ENCODE measurements at regions of chr2 and their contacts with region 1.

Region 1: DNA sequence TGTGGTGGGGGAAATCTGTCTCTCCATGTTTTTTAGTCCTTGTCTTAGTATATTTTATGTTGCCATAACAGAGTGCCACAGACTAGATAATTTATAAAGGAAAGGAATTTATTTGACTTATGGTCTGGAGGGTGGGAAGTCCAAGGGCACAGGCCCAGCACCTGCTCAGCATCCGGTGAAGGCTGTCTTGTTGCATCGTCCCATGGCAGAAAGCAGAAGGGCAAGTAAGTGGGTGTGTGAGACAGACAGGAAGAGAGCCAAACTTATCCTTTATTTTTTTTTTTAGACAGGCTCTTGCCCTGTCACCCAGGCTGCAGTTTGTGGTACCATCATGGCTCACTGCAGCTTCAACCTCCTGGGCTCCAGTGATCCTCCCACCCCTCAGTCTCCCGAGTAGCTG is 98.1 kb downstream of the HS1BP3 start:
- DNase-seq: no peak
- ATAC-seq: no peak
- H3K4me3 ChIP-seq: no peak overlapping the region
- H3K27ac ChIP-seq: no peak overlapping the region
- H3K4me1 ChIP-seq: no peaks in the 10 kb centered on the region
- H3K27me3 ChIP-seq: no peaks in the 10 kb centered on the region
- CTCF ChIP-seq: no peak

Region 2: DNA sequence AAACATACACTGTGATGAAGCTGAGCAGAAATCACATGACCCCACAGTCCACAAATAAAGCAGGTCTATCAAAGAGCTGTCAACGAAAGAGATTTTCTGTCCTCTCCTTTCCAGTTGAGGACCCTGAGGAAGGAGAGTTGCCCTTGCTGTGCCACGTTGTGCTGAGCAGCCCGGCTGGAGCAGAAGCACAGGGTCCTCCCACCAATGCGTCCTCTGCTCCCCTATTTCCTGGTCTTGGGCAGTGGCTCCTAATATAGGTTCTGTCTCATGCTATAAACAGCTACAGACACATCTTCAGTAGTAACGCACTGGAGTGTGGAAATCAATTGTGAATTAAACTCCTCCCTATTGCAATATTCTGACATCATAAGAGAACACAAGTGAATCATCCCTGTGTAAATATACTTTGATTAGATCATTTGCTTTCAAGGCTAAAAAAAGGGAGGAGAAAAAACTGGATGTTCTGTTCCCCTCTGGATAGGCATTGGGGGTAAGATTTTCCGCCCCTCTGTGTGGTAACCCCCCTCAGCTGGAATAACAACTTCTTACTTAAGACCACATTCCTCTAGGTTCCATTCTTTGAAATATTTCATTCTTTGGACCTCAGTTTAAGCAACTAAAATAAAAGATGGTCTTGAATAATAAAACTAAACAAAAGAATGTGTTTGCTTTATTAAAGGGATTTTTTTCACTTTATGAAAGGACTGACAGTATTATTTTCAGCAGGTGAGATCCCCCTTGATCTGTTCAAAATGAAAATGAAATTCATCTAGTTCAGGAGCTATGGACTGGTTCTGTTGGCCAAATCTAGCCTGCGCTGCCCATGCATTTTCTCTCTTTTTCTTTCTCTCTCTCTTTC is 114.3 kb before region 1 on chr2:
- CTCF ChIA-PET with region 1: no interaction called
- POLR2A ChIA-PET with region 1: interaction called, 12 read pairs
- intact Hi-C with region 1: no loop called
- DNase-seq: peak; percentile 87
- ATAC-seq: peak; percentile 90
- H3K4me3 ChIP-seq: peak overlapping the region; percentile 57
- H3K27ac ChIP-seq: peak overlapping the region; percentile 83
- H3K4me1 ChIP-seq: peaks cover 23% of the 10 kb centered on the region
- H3K27me3 ChIP-seq: no peaks in the 10 kb centered on the region
- CTCF ChIP-seq: no peak